ENCODE measurements at regions of chr19 and their contacts with region 1.

Region 1: DNA sequence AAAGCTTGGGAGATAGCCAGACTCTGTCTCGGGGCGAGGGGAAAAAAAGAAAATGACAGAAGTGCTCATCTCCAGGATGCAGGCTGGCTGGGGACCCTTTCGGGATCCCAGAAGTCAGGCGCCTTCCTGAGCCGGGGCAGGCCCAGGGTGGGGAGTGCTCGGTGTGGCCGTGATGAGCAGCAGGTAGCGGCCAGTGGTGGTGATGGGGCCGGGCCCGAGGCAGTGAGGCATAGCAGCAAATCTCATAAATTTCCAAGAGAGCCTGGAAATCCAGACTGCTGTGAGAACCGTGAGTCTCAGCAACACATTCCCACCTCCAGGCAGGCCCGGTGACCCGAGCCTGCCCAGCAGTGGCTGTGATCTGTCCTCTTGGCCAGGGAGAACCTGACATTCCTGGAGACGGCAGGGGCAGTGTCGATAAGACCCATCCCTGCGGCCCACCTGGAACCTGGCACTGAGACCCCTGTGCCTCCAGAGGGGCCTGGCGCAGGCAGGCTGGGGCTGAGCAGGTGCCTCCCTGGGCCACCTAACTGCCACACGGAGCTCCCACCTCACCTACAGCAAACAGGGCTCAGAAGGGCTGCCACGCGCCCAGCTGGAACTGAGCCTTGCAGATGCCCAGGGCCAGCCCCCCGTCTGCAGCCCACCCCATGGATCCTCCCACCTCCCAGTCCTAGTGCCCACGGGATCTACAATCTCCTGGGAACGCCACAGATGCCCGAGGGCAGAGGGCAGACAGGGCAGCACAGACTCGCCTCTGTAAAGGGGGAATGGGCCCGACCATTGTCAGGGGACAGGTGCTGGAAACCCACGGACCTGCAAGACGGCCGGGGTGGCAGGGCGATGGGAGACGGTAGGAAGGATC is 23.4 kb downstream of the IZUMO4 start:
- DNase-seq: no peak
- ATAC-seq: no peak
- H3K4me3 ChIP-seq: no peak overlapping the region
- H3K4me3 Mint-ChIP-seq: no peak overlapping the region
- H3K27ac ChIP-seq: no peak overlapping the region
- H3K27ac Mint-ChIP-seq: no peak overlapping the region
- H3K4me1 ChIP-seq: no peaks in the 10 kb centered on the region
- H3K4me1 Mint-ChIP-seq: no peaks in the 10 kb centered on the region
- H3K27me3 ChIP-seq: no peaks in the 10 kb centered on the region
- H3K27me3 Mint-ChIP-seq: no peaks in the 10 kb centered on the region

Region 2: DNA sequence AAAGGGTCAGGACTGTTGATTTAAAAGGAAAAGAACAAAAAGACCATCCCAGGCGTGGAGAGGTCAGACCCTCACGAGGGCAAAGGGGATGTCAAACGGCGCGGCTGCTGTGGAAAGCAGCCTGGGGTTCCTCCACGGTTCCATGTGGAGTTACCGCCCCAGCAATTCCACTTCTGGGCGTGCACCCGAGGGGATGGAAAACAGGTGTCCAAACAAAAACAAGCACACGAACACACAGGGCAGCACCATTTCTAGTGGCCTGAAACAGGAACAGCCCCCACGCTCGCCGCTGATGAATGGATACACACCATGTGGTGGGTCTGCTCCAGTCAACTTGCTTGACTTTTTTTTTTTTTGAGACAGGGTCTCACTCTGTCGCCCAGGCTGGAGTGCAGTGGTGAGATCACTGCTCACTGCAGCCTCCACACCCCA is 20.0 kb after region 1 on chr19:
- CTCF ChIA-PET with region 1: no interaction called
- POLR2A ChIA-PET with region 1: interaction called in 1 of 2 experiments, 10 read pairs
- DNase-seq: no peak
- ATAC-seq: no peak
- H3K4me3 ChIP-seq: no peak overlapping the region
- H3K4me3 Mint-ChIP-seq: no peak overlapping the region
- H3K27ac ChIP-seq: no peak overlapping the region
- H3K27ac Mint-ChIP-seq: no peak overlapping the region
- H3K4me1 ChIP-seq: peaks cover 2 to 24% of the 10 kb centered on the region in 2 experiments
- H3K4me1 Mint-ChIP-seq: peaks cover 10 to 20% (median 19%) of the 10 kb centered on the region in 3 donors
- H3K27me3 ChIP-seq: no peaks in the 10 kb centered on the region
- H3K27me3 Mint-ChIP-seq: no peaks in the 10 kb centered on the region